Right ventricle myocardium inferior (tissue), 1 donor: ENCODE measurements at regions of chr7 and their contacts with region 1.

Region 1: DNA sequence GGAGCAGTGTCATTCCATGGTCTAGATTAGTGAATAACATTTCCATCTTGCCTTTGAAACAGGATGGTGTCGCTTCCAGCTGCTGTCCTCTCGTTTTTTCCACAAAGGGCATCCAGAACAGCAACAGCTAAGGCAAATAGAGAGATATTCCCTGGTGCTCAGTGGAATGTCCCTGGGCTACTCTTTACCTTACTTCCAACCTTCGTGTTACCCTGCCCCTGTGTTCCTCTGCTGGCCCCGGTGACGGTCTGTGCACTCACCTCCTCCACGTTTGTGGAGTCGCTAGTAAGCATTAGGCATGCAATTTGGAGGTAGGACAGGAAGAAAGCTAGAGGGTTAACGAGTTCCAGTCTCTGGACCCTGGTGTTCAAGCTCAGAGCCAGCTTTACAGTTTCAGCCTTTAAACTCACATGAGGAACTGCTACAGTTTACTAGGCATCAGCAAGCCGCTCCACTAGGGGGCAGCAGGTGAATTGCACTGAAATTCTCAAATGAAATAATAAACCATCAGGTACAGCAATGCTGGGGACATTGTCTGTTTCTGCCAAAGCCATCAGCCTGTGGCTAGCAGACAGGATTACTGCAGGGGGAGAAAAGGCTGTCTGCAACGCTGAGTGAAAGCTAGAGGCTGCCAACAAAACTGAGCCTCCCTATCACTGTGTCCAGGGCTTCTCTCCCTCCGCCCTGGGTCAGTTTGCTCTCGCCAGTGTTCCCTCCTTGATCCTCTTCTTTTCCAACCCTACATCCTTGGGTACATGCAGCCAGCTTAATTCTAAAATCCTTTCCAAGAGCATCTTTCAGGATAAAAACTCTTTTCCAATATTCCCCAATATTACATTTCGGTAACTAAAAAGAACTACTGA is 9.0 kb downstream of the MRPL32 start:
- DNase-seq: peak; percentile 78
- ATAC-seq: peak; percentile 70

Region 2: DNA sequence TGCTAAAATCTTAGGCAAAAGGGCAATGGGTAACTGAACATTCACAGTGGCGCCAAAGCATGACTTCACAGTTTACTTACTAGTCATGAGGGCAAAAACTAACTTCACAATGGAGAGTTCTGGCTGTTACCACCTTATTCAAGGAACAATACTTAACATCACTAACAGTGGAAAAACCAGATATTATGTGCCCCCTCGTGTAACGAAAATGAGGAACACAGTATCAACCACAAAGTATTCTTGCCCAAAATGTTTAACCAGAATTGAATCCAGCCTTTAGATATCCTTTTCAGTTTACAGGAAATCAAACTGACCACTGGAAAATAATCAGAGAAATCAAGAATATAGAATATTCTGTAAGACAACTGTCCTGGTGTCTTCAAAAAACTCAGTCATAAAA is 38.9 kb before region 1 on chr7:
- intact Hi-C with region 1: no loop called
- DNase-seq: no peak
- ATAC-seq: no peak

Region 3: GRCh38 chr7:43108255-43109011 is 167.2 kb after region 1 on chr7:
- intact Hi-C with region 1: loop called (anchors 5 kb)
- DNase-seq: no peak
- ATAC-seq: peak; percentile 64

Region 4: GRCh38 chr7:43260980-43261878 is 320.0 kb after region 1 on chr7:
- intact Hi-C with region 1: loop called (anchors 1 kb)
- DNase-seq: peak; percentile 75
- ATAC-seq: peak; percentile 52